OCI-LY7 (cell line): ENCODE measurements at regions of chr12 and their contacts with region 1.

Region 1: DNA sequence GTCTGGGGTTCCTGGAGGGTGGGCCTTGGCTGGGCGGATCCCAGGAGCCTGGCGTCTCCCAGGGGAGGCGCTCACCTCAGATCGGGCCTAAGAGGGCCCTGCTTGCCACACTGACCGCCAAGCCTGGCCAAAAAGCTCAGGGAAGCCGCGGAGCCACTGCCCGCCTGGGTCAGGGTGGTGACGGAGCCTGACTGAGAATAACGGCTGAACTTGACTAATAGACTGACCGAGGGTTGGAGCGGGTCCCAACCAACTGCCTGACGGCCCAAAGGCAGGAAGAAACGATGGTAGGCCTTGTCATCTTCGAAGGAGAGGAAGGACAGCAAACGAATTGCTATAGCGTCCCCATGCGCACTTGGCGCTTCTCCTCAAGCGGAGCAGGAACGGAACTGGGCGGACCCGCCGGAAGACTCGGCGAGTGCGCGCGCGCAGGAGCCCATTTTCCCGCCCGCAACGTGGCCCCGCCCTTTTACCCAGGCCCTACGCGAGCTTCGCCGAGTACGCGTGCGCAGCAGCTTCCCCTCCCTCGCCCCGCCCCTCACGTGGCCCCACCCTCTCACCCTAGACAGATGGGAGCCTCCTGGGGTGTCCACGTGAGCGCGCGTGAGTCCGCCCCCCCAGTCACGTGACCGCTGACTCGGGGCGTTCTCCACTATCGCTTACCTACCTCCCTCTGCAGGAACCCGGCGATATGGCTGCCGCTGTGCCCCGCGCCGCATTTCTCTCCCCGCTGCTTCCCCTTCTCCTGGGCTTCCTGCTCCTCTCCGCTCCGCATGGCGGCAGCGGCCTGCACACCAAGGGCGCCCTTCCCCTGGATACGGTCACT is at the starts of genes ERP29 and TMEM116:
- DNase-seq: peak; percentile 99
- H3K4me3 ChIP-seq: peak within 1 kb of the TSS; percentile 88
- H3K27ac ChIP-seq: peak within 1 kb of the TSS; percentile 92
- H3K4me1 ChIP-seq: peaks cover 29% of the 10 kb centered on the region
- CTCF ChIP-seq: peak; percentile 49
- total RNA-seq, gene ERP29: 72.1 and 112 TPM in 2 replicates
- total RNA-seq, gene TMEM116: 8.8 and 9.0 TPM in 2 replicates

Region 2: DNA sequence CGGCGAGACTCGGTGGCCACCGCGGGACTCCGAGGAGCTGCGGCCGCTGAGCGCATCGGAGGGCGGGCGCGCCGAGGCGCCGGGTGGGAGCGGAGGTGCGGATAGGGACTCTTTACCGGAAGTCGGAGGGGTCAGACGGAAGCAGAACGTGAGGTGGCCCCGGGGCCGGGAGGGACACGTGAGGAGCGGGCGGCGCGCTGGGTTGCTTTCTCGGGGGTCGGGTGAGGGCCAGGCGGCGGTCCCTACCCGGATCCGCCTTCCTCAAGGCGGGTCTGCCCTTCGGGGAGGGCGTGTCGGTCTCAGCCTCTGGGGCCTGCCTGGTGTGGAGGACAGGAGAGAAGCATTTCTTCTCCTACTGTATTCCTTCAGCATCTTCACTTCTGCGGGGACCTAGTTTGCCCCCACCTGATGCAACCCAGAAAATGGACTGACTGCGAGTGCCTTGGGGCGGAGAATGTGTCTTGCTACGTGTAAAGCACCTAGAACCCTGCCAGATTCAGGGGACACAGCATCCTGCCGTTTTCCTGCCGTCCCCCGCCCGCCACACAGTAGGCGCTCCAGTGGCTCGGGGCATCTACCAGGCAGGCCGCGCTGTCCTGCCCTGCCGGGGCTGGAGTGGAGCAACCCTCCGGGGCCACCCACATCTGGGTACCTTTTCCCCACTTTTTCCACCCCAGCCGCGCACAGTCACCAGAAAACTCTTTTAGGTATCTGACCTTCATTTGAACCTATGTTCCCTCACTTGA is 413.4 kb before region 1 on chr12:
- CTCF ChIA-PET with region 1: no interaction called
- POLR2A ChIA-PET with region 1: no interaction called
- intact Hi-C with region 1: loop called (anchors 2 kb)
- DNase-seq: peak; percentile 95
- H3K4me3 ChIP-seq: peak overlapping the region; percentile 97
- H3K27ac ChIP-seq: peak overlapping the region; percentile 77
- H3K4me1 ChIP-seq: peaks cover 27% of the 10 kb centered on the region
- CTCF ChIP-seq: no peak

Region 3: GRCh38 chr12:111841750-111842555 is 171.0 kb before region 1 on chr12 and contains the start of gene MAPKAPK5:
- CTCF ChIA-PET with region 1: no interaction called
- POLR2A ChIA-PET with region 1: no interaction called
- intact Hi-C with region 1: loop called (anchors 1 kb)
- DNase-seq: peak; percentile 97
- H3K4me3 ChIP-seq: peak within 1 kb of the TSS; percentile 86
- H3K27ac ChIP-seq: peak within 1 kb of the TSS; percentile 71
- H3K4me1 ChIP-seq: peaks cover 21% of the 10 kb centered on the region
- CTCF ChIP-seq: no peak
- total RNA-seq, gene MAPKAPK5: 79.2 and 83.5 TPM in 2 replicates

Region 4: GRCh38 chr12:111993292-111994150 is 19.5 kb before region 1 on chr12:
- CTCF ChIA-PET with region 1: no interaction called
- POLR2A ChIA-PET with region 1: interaction called, 4 read pairs
- intact Hi-C with region 1: loop called (anchors 2 kb)
- DNase-seq: no peak
- H3K4me3 ChIP-seq: no peak overlapping the region
- H3K27ac ChIP-seq: no peak overlapping the region
- H3K4me1 ChIP-seq: peaks cover 19% of the 10 kb centered on the region
- CTCF ChIP-seq: no peak

Region 5: DNA sequence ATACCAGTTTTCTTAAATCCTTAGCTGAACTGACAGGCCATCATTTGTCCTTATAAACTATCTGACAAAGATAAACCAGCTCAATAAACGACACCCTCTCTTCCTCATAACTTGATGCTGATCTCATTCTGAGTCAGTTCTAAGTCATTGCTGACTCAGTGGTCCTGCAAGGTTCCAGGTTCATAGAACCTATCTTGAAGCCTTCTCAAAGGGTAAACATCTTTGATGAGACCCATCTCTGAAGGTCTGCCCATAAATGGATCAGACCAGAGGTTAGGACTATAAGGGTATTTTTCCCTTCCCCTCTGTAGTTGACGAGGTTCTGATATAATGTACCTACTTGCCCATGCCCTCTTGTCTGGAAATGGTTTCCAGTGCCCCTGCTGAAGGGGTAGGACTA is 83.7 kb after region 1 on chr12:
- CTCF ChIA-PET with region 1: no interaction called
- POLR2A ChIA-PET with region 1: no interaction called
- intact Hi-C with region 1: no loop called
- DNase-seq: no peak
- H3K4me3 ChIP-seq: no peak overlapping the region
- H3K27ac ChIP-seq: no peak overlapping the region
- H3K4me1 ChIP-seq: no peaks in the 10 kb centered on the region
- CTCF ChIP-seq: no peak

Region 6: GRCh38 chr12:112382232-112382796 is 369.3 kb after region 1 on chr12 and contains the start of gene HECTD4:
- CTCF ChIA-PET with region 1: no interaction called
- POLR2A ChIA-PET with region 1: no interaction called
- intact Hi-C with region 1: loop called (anchors 2 kb)
- DNase-seq: peak; percentile 94
- H3K4me3 ChIP-seq: peak within 1 kb of the TSS; percentile 80
- H3K27ac ChIP-seq: peak within 1 kb of the TSS; percentile 80
- H3K4me1 ChIP-seq: peaks cover 14% of the 10 kb centered on the region
- CTCF ChIP-seq: no peak
- total RNA-seq, gene HECTD4: 18.1 and 34.5 TPM in 2 replicates